Endothelial cell of umbilical vein (primary cell): ENCODE measurements at regions of chr1 and their contacts with region 1.

Region 1: GRCh38 chr1:89657886-89658285 is 25.0 kb downstream of the LRRC8C start:
- DNase-seq: peak; percentile 44
- H3K4me3 ChIP-seq: no peak overlapping the region
- H3K27ac ChIP-seq: no peak overlapping the region
- H3K4me1 ChIP-seq: peaks cover 14% of the 10 kb centered on the region
- H3K27me3 ChIP-seq: no peaks in the 10 kb centered on the region
- CTCF ChIP-seq: no peak
- POLR2A ChIP-seq: no peak

Region 2: DNA sequence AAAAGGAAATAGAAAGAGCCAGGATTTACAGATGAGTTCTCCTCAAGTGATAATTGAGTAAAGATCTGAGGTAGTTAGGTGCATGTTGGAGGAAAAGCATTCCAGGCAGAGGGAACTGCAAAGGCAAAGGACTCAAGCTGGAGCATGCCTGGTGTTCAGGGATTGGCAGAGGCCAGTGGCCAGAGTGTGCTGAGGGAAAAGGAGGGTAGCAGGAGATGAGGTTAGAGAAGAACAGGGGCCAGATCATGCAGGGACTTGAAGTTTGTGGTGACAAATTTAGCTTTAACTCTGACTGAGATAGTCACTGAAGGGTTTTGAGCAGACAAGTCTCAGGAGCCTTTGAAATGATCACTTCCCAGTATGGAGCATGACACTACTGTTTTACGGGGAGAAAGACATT is 747.5 kb before region 1 on chr1:
- CTCF ChIA-PET with region 1: no interaction called
- POLR2A ChIA-PET with region 1: no interaction called
- dilution Hi-C with region 1: no loop called
- intact Hi-C with region 1: no loop called
- DNase-seq: no peak
- H3K4me3 ChIP-seq: no peak overlapping the region
- H3K27ac ChIP-seq: no peak overlapping the region
- H3K4me1 ChIP-seq: no peaks in the 10 kb centered on the region
- H3K27me3 ChIP-seq: no peaks in the 10 kb centered on the region
- CTCF ChIP-seq: no peak
- POLR2A ChIP-seq: no peak

Region 3: GRCh38 chr1:89670163-89670562 is 12.3 kb after region 1 on chr1:
- CTCF ChIA-PET with region 1: interaction called, 21 read pairs
- POLR2A ChIA-PET with region 1: no interaction called
- dilution Hi-C with region 1: no loop called
- intact Hi-C with region 1: no loop called
- DNase-seq: peak; percentile 27
- H3K4me3 ChIP-seq: no peak overlapping the region
- H3K27ac ChIP-seq: no peak overlapping the region
- H3K4me1 ChIP-seq: peaks cover 51% of the 10 kb centered on the region
- H3K27me3 ChIP-seq: no peaks in the 10 kb centered on the region
- CTCF ChIP-seq: no peak
- POLR2A ChIP-seq: no peak